ENCODE measurements at regions of chr2 and their contacts with region 1.

Region 1: DNA sequence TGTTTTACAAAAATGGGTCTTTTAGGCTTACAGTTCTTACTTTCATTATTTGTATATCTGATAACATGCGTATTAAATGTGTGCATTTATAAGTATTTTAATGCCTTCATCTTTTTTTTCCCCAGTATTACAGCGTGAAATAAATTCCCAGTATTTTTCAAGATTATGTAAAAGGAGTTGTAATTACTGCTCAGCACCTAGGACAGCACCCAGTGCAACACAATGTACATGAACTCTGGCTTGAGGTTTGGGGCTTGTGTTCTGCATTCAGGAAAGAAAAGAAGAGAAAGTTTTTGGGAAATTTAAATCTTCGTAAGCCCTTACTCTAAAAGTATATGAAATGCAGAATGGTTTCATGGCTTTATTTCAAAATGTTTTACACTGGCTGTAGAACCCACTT is 16.7 kb downstream of the ZNF638 start:
- DNase-seq: no peak
- H3K27ac ChIP-seq: no peak overlapping the region
- CTCF ChIP-seq: no peak

Region 2: GRCh38 chr2:71223767-71224333 is 124.5 kb before region 1 on chr2:
- CTCF ChIA-PET with region 1: interaction called, 3 read pairs
- POLR2A ChIA-PET with region 1: interaction called, 10 read pairs
- DNase-seq: peak; percentile 18
- H3K27ac ChIP-seq: no peak overlapping the region
- CTCF ChIP-seq: peak; percentile 42

Measured in RWPE1 (cell line).